K562 (cell line): ENCODE measurements at regions of chr2 and their contacts with region 1.

Region 1: DNA sequence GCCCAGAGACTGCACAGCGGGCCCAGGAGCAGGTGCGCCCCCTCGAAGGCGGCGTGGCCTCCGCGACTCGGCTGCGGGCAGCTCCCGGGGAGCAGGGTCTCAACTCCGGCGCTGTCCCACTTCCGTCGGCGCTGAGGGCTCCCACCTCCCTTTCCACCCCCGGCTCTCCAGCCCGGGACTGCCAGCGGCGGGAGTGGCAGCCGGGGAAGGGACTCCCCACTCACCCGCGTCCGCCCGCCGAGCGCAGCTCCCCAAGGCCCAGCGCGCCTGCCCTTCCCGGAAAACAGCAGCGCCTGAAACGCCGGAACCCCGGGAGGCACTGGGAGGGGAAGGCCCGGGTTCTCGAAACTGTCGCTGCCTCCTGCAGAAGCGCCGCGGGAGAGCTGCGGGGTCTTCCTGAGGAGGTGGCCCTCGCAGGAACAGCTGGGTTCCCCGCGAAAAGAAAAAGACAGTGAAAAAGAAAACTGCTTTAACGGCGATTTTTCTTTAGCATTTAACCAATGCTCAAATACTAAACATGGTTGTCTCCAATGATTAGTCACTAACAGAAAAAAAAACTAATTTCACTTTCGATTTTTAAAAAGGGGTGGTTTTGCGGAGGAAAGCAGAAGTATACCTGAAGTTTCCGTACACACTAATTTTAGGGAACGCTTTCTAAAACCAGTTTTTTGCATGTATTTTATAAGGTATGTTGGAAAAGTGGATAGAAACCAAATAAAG is at the start of gene NMI:
- DNase-seq: peak; percentile 69 to 78 (median 73)
- ATAC-seq: peak; percentile 81
- H3K4me3 ChIP-seq: peak within 1 kb of the TSS; percentile 56
- H3K27ac ChIP-seq: peak within 1 kb of the TSS; percentile 93
- H3K4me1 ChIP-seq: peaks cover 14 to 22% of the 10 kb centered on the region in 2 experiments; a peak in 4 of 5 replicates
- H3K27me3 ChIP-seq: no peaks in the 10 kb centered on the region
- CTCF ChIP-seq: peak in 1 of 3 experiments; percentile 4; a peak in 1 of 6 replicates
- EP300 ChIP-seq: 0 out of 2 replicates have a peak, but pooled peaks have one; percentile 5
- POLR2A ChIP-seq: peak; percentile 70
- RAD21 ChIP-seq: 0 out of 4 replicates have a peak, but pooled peaks of 1 of the 2 experiments have one; percentile 3
- polyA plus RNA-seq, gene NMI: 29.7 to 36.4 TPM

Region 2: DNA sequence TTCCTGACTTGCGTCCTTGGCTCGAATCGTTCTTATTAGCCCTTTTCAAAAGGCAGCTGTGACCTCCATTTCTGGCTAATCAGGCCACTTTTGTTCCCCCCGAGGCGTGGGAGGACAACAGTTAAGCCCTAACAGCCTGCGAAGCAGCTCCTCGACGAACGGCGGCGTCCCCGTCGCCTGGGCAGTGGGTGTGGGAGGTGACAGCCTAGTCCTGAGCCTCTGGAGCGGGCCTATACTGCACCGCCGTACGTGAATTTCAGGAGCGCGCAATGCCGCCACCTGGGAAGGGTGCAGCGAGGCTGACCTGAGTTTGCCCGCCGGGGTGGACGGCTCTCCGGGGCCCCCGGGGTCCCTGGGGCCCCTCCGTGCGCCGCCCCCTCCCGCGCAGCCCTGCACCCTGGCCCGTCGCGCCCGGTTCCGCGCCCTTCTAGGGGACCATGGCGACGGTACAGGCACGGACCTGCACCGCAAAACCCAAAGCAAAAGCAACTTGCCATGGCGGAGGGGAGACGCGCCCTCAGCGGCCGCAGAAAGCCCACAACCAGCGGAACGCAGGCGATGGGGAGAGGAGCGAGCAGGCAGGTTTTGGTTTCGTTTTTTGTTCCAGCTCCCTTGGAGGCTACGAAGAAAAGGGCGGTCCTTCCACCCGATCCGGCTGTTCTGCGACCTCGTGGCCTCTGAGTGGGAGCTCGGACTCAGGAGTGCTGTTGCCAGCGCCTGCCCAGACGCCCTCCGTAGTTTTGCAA is 28.1 kb before region 1 on chr2 and contains the start of gene RBM43:
- CTCF ChIA-PET with region 1: no interaction called
- POLR2A ChIA-PET with region 1: interaction called, 6 read pairs
- in situ Hi-C with region 1: no loop called
- intact Hi-C with region 1: loop called (anchors 2 kb)
- DNase-seq: peak; percentile 90 to 93 (median 92)
- ATAC-seq: peak; percentile 93
- H3K4me3 ChIP-seq: peak within 1 kb of the TSS; percentile 66
- H3K27ac ChIP-seq: peak within 1 kb of the TSS; percentile 84
- H3K4me1 ChIP-seq: peaks cover 13 to 14% of the 10 kb centered on the region in 2 experiments
- H3K27me3 ChIP-seq: no peaks in the 10 kb centered on the region
- CTCF ChIP-seq: peak in 1 of 3 experiments; percentile 30; a peak in 1 of 6 replicates
- EP300 ChIP-seq: peak; percentile 71
- POLR2A ChIP-seq: peak; percentile 73
- RAD21 ChIP-seq: peak in 1 of 2 experiments; percentile 31; a peak in 2 of 4 replicates
- polyA plus RNA-seq, gene RBM43: 1.3 to 1.6 TPM

Region 3: DNA sequence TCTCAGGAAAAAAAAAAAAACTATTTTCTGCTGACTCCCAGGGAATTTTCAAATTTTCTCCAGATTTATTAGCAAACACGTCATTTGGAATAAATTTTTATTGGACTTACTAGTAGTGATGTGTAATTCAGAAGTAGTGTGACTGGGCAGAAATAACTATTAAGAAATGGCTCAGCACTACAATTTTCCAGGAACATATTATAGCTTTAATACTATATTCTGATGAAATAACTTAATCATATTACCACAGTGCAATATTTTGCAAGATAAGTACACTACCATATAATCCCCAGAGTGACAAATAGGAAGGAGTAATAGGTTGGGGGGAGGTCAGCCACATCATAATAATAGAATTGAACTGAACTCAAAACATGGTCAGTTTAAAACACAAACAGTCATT is 48.1 kb after region 1 on chr2:
- CTCF ChIA-PET with region 1: no interaction called
- POLR2A ChIA-PET with region 1: no interaction called
- in situ Hi-C with region 1: no loop called
- intact Hi-C with region 1: loop called (anchors 5 kb)
- DNase-seq: no peak
- ATAC-seq: no peak
- H3K4me3 ChIP-seq: no peak overlapping the region
- H3K27ac ChIP-seq: no peak overlapping the region
- H3K4me1 ChIP-seq: no peaks in the 10 kb centered on the region
- H3K27me3 ChIP-seq: no peaks in the 10 kb centered on the region
- CTCF ChIP-seq: no peak
- EP300 ChIP-seq: no peak
- POLR2A ChIP-seq: no peak
- RAD21 ChIP-seq: no peak

Region 4: GRCh38 chr2:152717228-152718075 is 1427.9 kb after region 1 on chr2 and contains the start of gene PRPF40A:
- CTCF ChIA-PET with region 1: no interaction called
- POLR2A ChIA-PET with region 1: no interaction called
- in situ Hi-C with region 1: no loop called
- intact Hi-C with region 1: loop called (anchors 5 kb)
- DNase-seq: peak; percentile 99 to 100 (median 100)
- ATAC-seq: peak; percentile 83
- H3K4me3 ChIP-seq: peak within 1 kb of the TSS; percentile 79
- H3K27ac ChIP-seq: peak within 1 kb of the TSS; percentile 98
- H3K4me1 ChIP-seq: peaks cover 3 to 16% of the 10 kb centered on the region in 2 experiments; a peak in 2 of 5 replicates
- H3K27me3 ChIP-seq: no peaks in the 10 kb centered on the region
- CTCF ChIP-seq: no peak
- EP300 ChIP-seq: no peak
- POLR2A ChIP-seq: peak; percentile 94
- RAD21 ChIP-seq: no peak
- polyA plus RNA-seq, gene PRPF40A: 168 to 190 TPM